ENCODE measurements at regions of chr20 and their contacts with region 1.

Region 1: GRCh38 chr20:32437391-32438074 is 79.4 kb downstream of the ASXL1 start:
- DNase-seq: peak in 5 of 14 experiments; percentile 16 to 56 (median 45)
- ATAC-seq: peak; percentile 30
- H3K4me3 ChIP-seq: no peak overlapping the region
- H3K4me3 Mint-ChIP-seq: no peak overlapping the region
- H3K27ac ChIP-seq: no peak overlapping the region
- H3K27ac Mint-ChIP-seq: no peak overlapping the region
- H3K4me1 ChIP-seq: no peaks in the 10 kb centered on the region
- H3K4me1 Mint-ChIP-seq: peaks cover 7% of the 10 kb centered on the region
- H3K27me3 ChIP-seq: no peaks in the 10 kb centered on the region
- H3K27me3 Mint-ChIP-seq: no peaks in the 10 kb centered on the region
- CTCF ChIP-seq: peak; percentile 21

Region 2: GRCh38 chr20:32336918-32337347 is 100.6 kb before region 1 on chr20:
- CTCF ChIA-PET with region 1: no interaction called
- POLR2A ChIA-PET with region 1: no interaction called
- intact Hi-C with region 1: loop called (anchors 2 to 5 kb)
- DNase-seq: peak in 3 of 14 experiments; percentile 35 to 53 (median 53)
- ATAC-seq: peak; percentile 73
- H3K4me3 ChIP-seq: no peak overlapping the region
- H3K4me3 Mint-ChIP-seq: no peak overlapping the region
- H3K27ac ChIP-seq: no peak overlapping the region
- H3K27ac Mint-ChIP-seq: peak overlapping the region; percentile 1
- H3K4me1 ChIP-seq: peaks cover 26% of the 10 kb centered on the region
- H3K4me1 Mint-ChIP-seq: peaks cover 22% of the 10 kb centered on the region
- H3K27me3 ChIP-seq: no peaks in the 10 kb centered on the region
- H3K27me3 Mint-ChIP-seq: no peaks in the 10 kb centered on the region
- CTCF ChIP-seq: peak; percentile 64

Region 3: DNA sequence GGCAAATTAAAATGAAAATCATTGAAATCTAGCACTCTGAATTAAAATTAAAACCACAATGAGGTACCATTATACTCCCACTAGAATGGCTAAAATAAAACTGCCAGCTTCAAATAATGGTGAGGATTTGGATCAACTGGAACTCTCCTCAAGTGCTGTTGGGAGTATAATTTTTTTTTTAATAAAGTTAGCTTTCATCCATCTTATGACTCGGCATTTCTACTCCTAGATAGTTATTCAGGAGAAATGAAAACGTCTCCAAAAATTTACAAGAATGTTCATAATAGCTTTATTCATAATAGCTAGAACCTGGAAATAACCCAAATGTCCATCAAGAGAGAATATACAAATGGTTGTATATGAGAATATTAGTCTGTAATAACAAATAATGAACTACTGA is 16.2 kb before region 1 on chr20:
- CTCF ChIA-PET with region 1: no interaction called
- POLR2A ChIA-PET with region 1: no interaction called
- intact Hi-C with region 1: no loop called
- DNase-seq: no peak
- ATAC-seq: no peak
- H3K4me3 ChIP-seq: no peak overlapping the region
- H3K4me3 Mint-ChIP-seq: no peak overlapping the region
- H3K27ac ChIP-seq: no peak overlapping the region
- H3K27ac Mint-ChIP-seq: no peak overlapping the region
- H3K4me1 ChIP-seq: peaks cover under 1% of the 10 kb centered on the region
- H3K4me1 Mint-ChIP-seq: peaks cover 38% of the 10 kb centered on the region
- H3K27me3 ChIP-seq: no peaks in the 10 kb centered on the region
- H3K27me3 Mint-ChIP-seq: no peaks in the 10 kb centered on the region
- CTCF ChIP-seq: no peak

Region 4: GRCh38 chr20:32574296-32575226 is 137.0 kb after region 1 on chr20:
- CTCF ChIA-PET with region 1: no interaction called
- POLR2A ChIA-PET with region 1: no interaction called
- intact Hi-C with region 1: no loop called
- DNase-seq: peak in 5 of 14 experiments; percentile 20 to 68 (median 59)
- ATAC-seq: peak; percentile 33
- H3K4me3 ChIP-seq: no peak overlapping the region
- H3K4me3 Mint-ChIP-seq: no peak overlapping the region
- H3K27ac ChIP-seq: peak overlapping the region in 1 of 2 donors; percentile 30
- H3K27ac Mint-ChIP-seq: no peak overlapping the region
- H3K4me1 ChIP-seq: peaks cover 98% of the 10 kb centered on the region
- H3K4me1 Mint-ChIP-seq: peaks cover 58% of the 10 kb centered on the region
- H3K27me3 ChIP-seq: no peaks in the 10 kb centered on the region
- H3K27me3 Mint-ChIP-seq: no peaks in the 10 kb centered on the region
- CTCF ChIP-seq: no peak

Measured in CD4-positive, alpha-beta T cell (primary cell).